CD4-positive, alpha-beta memory T cell (primary cell): ENCODE measurements at regions of chr18 and their contacts with region 1.

Region 1: DNA sequence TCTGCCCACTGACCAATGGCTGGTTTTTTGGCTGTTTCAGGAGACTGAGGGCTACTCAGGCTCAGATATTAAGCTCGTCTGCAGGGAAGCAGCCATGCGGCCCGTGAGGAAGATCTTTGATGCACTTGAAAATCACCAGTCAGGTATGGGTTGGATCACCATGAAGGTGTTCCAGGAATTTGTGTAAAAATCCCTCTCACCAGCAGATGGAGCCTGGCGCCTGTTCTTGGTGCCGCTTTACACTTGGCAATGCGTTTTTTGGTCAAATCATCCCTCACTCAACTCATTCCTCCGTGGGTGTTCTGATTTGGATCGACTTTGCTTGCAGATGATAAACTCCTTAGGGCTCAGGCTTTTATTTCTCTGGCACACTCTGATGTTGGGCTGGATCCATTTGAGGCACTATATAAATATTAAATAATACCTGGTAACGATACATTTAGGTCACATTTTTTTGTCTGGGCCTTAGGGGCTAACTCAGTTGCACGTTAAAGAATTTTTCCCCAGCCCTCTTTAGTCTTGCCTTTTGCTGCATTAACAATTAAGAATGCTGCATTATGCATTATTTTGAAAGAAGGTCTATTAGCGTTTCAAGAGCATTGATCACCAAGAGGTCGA is 50.0 kb downstream of the HDHD2 start:
- DNase-seq: peak; percentile 48 to 64 (median 55)
- H3K4me3 ChIP-seq: no peak overlapping the region
- H3K4me3 Mint-ChIP-seq: no peak overlapping the region
- H3K27ac ChIP-seq: no peak overlapping the region
- H3K27ac Mint-ChIP-seq: no peak overlapping the region
- H3K4me1 ChIP-seq: no peaks in the 10 kb centered on the region
- H3K4me1 Mint-ChIP-seq: no peaks in the 10 kb centered on the region
- H3K27me3 ChIP-seq: no peaks in the 10 kb centered on the region
- H3K27me3 Mint-ChIP-seq: no peaks in the 10 kb centered on the region

Region 2: GRCh38 chr18:47081578-47081977 is 18.7 kb before region 1 on chr18:
- CTCF ChIA-PET with region 1: no interaction called
- POLR2A ChIA-PET with region 1: no interaction called
- intact Hi-C with region 1: no loop called
- DNase-seq: no peak
- H3K4me3 ChIP-seq: no peak overlapping the region
- H3K4me3 Mint-ChIP-seq: no peak overlapping the region
- H3K27ac ChIP-seq: no peak overlapping the region
- H3K27ac Mint-ChIP-seq: no peak overlapping the region
- H3K4me1 ChIP-seq: no peaks in the 10 kb centered on the region
- H3K4me1 Mint-ChIP-seq: no peaks in the 10 kb centered on the region
- H3K27me3 ChIP-seq: no peaks in the 10 kb centered on the region
- H3K27me3 Mint-ChIP-seq: peaks cover 0 to 2% of the 10 kb centered on the region in 2 donors

Region 3: GRCh38 chr18:47113796-47114540 is 13.6 kb after region 1 on chr18:
- CTCF ChIA-PET with region 1: interaction called, 13 read pairs
- POLR2A ChIA-PET with region 1: no interaction called
- intact Hi-C with region 1: no loop called
- DNase-seq: no peak
- H3K4me3 ChIP-seq: no peak overlapping the region
- H3K4me3 Mint-ChIP-seq: no peak overlapping the region
- H3K27ac ChIP-seq: no peak overlapping the region
- H3K27ac Mint-ChIP-seq: peak overlapping the region in 1 of 7 donors; percentile 70
- H3K4me1 ChIP-seq: no peaks in the 10 kb centered on the region
- H3K4me1 Mint-ChIP-seq: no peaks in the 10 kb centered on the region
- H3K27me3 ChIP-seq: no peaks in the 10 kb centered on the region
- H3K27me3 Mint-ChIP-seq: no peaks in the 10 kb centered on the region

Region 4: DNA sequence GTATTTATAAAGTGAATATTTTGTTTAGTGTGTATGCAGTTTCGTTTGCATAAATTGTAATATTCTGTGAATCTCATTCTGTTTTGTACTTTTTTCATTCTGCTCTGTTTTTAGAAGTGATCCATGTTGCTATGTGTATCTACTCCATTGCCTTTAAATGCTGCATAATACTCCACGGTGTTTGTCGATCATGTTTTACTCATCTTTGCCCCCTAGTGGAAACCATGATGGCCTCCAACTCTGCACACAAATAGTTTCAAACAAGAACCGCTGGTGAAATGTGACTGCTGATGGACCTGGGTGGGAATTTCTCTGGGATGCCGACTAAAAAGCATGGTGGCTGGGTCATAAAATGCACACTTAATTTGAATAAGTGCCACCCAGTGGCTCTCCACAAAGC is 183.2 kb after region 1 on chr18:
- CTCF ChIA-PET with region 1: interaction called, 3 read pairs
- POLR2A ChIA-PET with region 1: no interaction called
- intact Hi-C with region 1: loop called (anchors 2 kb)
- DNase-seq: no peak
- H3K4me3 ChIP-seq: no peak overlapping the region
- H3K4me3 Mint-ChIP-seq: no peak overlapping the region
- H3K27ac ChIP-seq: no peak overlapping the region
- H3K27ac Mint-ChIP-seq: peak overlapping the region in 1 of 7 donors; percentile 21
- H3K4me1 ChIP-seq: no peaks in the 10 kb centered on the region
- H3K4me1 Mint-ChIP-seq: no peaks in the 10 kb centered on the region
- H3K27me3 ChIP-seq: no peaks in the 10 kb centered on the region
- H3K27me3 Mint-ChIP-seq: peaks cover 1 to 18% of the 10 kb centered on the region in 2 donors